CD8-positive, alpha-beta T cell (primary cell): ENCODE measurements at regions of chr19 and their contacts with region 1.

Region 1: DNA sequence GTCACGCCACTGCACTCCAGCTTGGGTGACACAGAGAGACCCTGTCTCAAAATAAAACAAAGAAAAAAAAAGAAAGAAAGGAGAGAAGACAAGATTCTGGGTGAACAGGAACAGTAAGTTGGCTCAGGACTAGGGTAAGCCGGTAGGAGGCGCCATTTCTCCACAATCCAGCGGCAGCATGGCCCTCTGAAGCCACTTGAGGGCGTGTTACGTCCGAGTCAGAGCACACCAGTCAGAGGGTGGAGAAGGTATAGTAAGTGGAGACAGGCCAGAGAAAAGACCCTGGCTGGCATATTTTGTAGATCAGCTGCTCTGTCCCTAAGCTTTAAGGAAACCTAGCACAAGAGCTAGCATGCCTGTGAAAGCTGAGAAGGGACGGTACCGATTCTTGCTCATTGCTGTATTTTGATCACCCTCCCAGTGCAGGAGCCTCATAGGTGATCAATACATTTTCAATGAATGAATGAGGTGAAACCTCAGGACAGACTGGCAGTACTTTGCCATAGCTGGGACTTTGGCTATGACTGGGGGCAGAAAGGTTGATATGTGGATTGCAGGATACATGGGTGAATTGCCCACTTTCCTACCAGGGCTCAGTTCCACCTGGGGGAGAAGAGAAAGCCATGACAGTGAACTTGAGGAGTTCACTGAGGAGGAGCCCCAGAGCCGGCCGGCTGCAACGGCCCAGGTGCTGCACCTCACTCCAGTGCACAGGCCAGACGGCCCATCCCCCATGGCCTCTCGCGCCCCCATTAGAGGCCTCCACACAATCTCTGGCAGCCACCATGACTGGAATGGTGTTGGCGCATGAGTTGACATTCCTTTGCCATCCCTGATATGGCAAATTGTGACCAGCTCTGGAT is 23.5 kb downstream of the POU2F2 start:
- DNase-seq: peak; percentile 83 to 94 (median 91)
- ATAC-seq: peak; percentile 99
- H3K4me3 ChIP-seq: no peak overlapping the region
- H3K4me3 Mint-ChIP-seq: no peak overlapping the region
- H3K27ac ChIP-seq: no peak overlapping the region
- H3K27ac Mint-ChIP-seq: peak overlapping the region; percentile 20
- H3K4me1 ChIP-seq: peaks cover 4% of the 10 kb centered on the region
- H3K4me1 Mint-ChIP-seq: peaks cover 8% of the 10 kb centered on the region
- H3K27me3 ChIP-seq: no peaks in the 10 kb centered on the region
- H3K27me3 Mint-ChIP-seq: no peaks in the 10 kb centered on the region
- CTCF ChIP-seq: peak; percentile 100

Region 2: DNA sequence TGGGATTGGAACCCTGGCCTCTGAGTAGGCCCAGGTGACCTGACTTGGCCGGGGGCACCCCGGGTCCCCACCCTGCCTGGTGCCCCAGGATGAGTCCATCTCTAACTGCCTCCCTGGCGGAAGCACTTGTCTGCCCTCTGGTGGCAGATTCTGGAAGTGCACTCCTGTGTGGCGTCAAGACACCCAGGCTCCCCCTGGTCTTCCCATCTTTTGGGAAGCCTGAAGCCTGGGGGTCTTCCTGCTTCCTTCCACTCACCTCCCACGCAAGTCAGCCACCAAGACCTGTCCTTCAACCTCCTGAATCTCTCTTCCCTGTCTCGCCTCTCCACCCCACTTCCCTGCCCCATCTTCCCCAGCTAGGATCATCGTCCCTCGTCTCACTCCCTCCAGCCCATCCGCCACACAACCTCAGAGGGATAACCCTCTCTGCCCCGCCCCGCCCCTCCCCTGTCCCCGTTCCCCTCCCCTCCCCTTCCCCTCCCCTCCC is 157.0 kb before region 1 on chr19:
- CTCF ChIA-PET with region 1: no interaction called
- POLR2A ChIA-PET with region 1: no interaction called
- intact Hi-C with region 1: no loop called
- DNase-seq: peak; percentile 73 to 97 (median 89)
- ATAC-seq: peak; percentile 88
- H3K4me3 ChIP-seq: no peak overlapping the region
- H3K4me3 Mint-ChIP-seq: no peak overlapping the region
- H3K27ac ChIP-seq: no peak overlapping the region
- H3K27ac Mint-ChIP-seq: peak overlapping the region; percentile 85
- H3K4me1 ChIP-seq: peaks cover 15% of the 10 kb centered on the region
- H3K4me1 Mint-ChIP-seq: peaks cover 31% of the 10 kb centered on the region
- H3K27me3 ChIP-seq: no peaks in the 10 kb centered on the region
- H3K27me3 Mint-ChIP-seq: no peaks in the 10 kb centered on the region
- CTCF ChIP-seq: peak; percentile 96

Region 3: DNA sequence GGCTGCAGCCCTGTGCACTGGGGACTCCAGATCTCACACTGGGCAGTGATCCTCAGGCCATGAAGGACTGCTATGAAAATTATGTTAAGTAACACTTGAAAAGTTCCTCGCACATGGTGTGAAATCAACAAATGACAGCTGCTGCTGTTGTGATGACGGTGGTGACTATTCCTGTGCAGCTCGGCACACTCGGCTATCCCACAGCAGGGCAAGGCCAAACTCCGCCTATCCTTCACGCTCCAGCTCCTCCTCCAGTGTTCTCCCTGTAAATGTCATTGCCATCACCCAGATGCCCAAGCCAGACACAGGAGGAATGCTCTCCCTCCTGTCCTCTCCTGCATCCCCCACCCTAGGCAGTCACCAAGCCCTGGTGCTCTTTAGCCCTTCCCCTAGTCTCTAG is 70.1 kb before region 1 on chr19:
- CTCF ChIA-PET with region 1: no interaction called
- POLR2A ChIA-PET with region 1: no interaction called
- intact Hi-C with region 1: no loop called
- DNase-seq: no peak
- ATAC-seq: no peak
- H3K4me3 ChIP-seq: no peak overlapping the region
- H3K4me3 Mint-ChIP-seq: no peak overlapping the region
- H3K27ac ChIP-seq: no peak overlapping the region
- H3K27ac Mint-ChIP-seq: no peak overlapping the region
- H3K4me1 ChIP-seq: no peaks in the 10 kb centered on the region
- H3K4me1 Mint-ChIP-seq: peaks cover 5% of the 10 kb centered on the region
- H3K27me3 ChIP-seq: no peaks in the 10 kb centered on the region
- H3K27me3 Mint-ChIP-seq: no peaks in the 10 kb centered on the region
- CTCF ChIP-seq: no peak

Region 4: DNA sequence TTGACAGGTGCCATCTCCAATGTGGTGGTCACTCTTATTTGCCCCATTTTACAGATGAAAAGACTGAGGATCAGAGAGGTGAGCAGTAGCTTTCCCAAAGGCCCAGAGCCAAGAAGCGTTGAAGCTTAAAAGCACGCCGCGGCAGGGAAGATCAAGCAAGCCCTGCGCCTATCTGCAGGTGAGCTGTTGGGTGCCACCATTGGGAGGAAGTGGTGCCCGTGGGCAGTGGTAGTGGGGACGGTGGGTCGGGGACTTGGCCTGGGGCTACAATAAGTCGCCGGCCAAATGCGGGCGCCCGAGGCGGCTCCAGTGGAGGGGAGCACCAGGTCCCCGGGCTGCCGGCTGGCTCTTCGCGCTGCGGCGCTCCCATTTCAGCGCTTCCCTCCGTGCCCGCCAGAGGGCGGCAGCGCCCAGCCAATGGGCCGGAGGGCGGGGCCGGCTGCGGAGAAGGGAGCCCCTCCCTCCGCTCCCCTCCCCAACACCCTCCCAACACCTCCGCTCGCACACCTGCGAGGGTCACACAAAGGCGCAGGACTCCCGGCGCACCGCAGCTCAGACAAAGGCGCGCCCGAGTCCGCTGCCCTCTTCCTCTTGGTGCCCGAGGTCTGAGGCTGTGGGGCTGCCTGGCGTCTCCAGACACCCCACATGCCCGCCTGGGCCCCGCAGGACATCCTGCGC is 24.2 kb after region 1 on chr19:
- CTCF ChIA-PET with region 1: interaction called, 38 read pairs
- POLR2A ChIA-PET with region 1: no interaction called
- intact Hi-C with region 1: loop called (anchors 1 kb)
- DNase-seq: peak; percentile 69 to 95 (median 83)
- ATAC-seq: peak; percentile 69
- H3K4me3 ChIP-seq: peak overlapping the region; percentile 64 to 96
- H3K4me3 Mint-ChIP-seq: peak overlapping the region; percentile 83
- H3K27ac ChIP-seq: peak overlapping the region; percentile 54 to 68
- H3K27ac Mint-ChIP-seq: peak overlapping the region; percentile 86
- H3K4me1 ChIP-seq: peaks cover 66% of the 10 kb centered on the region
- H3K4me1 Mint-ChIP-seq: peaks cover 63% of the 10 kb centered on the region
- H3K27me3 ChIP-seq: no peaks in the 10 kb centered on the region
- H3K27me3 Mint-ChIP-seq: no peaks in the 10 kb centered on the region
- CTCF ChIP-seq: peak; percentile 93

Region 5: GRCh38 chr19:42176990-42177685 is 68.4 kb after region 1 on chr19:
- CTCF ChIA-PET with region 1: interaction called, 79 read pairs
- POLR2A ChIA-PET with region 1: interaction called, 3 read pairs
- intact Hi-C with region 1: loop called (anchors 2 kb)
- DNase-seq: peak; percentile 52 to 90 (median 74)
- ATAC-seq: peak; percentile 95
- H3K4me3 ChIP-seq: peak overlapping the region; percentile 49 to 50
- H3K4me3 Mint-ChIP-seq: no peak overlapping the region
- H3K27ac ChIP-seq: no peak overlapping the region
- H3K27ac Mint-ChIP-seq: no peak overlapping the region
- H3K4me1 ChIP-seq: peaks cover 17% of the 10 kb centered on the region
- H3K4me1 Mint-ChIP-seq: peaks cover 12% of the 10 kb centered on the region
- H3K27me3 ChIP-seq: peaks cover 0 to 22% of the 10 kb centered on the region in 2 experiments
- H3K27me3 Mint-ChIP-seq: peaks cover 27% of the 10 kb centered on the region
- CTCF ChIP-seq: peak; percentile 43

Region 6: DNA sequence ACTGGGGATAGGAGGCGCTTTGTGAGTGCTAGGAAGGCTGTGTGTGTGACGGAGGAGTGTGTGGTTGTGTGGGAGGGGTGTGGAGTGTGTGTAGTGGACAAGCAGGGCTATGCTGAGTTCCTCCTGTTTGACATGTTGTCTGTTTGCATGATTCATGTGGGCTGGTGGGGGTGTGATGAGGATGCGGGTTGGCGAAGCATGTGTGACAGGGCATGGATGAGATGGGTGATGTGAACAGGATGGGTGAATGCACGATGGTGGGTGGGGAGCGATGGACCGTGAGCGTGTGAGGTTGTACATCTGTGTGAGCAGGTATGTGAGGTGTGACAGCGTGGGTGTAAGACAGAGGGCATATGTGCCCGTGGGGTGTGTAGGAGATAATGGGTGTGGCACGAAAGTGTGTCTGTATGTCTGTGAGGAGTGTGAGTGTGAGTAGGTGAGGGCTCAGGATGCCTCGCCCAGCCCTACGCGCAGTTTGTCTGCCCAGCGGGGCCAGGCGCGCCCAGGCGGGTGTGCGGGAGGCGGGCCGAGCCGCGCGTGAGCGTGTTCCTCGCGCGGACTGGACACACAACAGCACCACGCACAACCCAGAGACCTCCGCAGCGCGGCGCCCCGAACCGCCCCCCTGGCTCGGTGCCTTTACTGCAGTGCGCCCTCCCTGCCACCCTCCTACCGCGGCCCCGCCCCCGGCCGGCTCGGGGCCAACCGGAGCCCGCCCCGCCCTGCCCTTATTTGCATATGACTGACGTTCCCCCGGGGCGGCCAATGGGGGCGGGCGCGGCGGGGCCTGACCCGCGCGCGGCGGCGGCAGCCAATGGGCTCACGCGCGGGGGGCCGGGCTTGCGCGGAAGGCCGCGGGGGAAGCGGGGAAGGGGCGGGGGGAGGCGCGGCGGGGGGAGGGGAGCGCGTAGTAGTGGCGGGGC is 174.6 kb after region 1 on chr19:
- CTCF ChIA-PET with region 1: interaction called, 11 read pairs
- POLR2A ChIA-PET with region 1: no interaction called
- intact Hi-C with region 1: no loop called
- DNase-seq: peak; percentile 90 to 98 (median 97)
- ATAC-seq: peak; percentile 69
- H3K4me3 ChIP-seq: peak overlapping the region; percentile 40 to 59
- H3K4me3 Mint-ChIP-seq: no peak overlapping the region
- H3K27ac ChIP-seq: peak overlapping the region; percentile 85 to 94
- H3K27ac Mint-ChIP-seq: no peak overlapping the region
- H3K4me1 ChIP-seq: peaks cover 47% of the 10 kb centered on the region
- H3K4me1 Mint-ChIP-seq: peaks cover 48% of the 10 kb centered on the region
- H3K27me3 ChIP-seq: no peaks in the 10 kb centered on the region
- H3K27me3 Mint-ChIP-seq: no peaks in the 10 kb centered on the region
- CTCF ChIP-seq: no peak

Region 7: GRCh38 chr19:42401365-42402303 is 292.9 kb after region 1 on chr19:
- CTCF ChIA-PET with region 1: interaction called, 8 read pairs
- POLR2A ChIA-PET with region 1: no interaction called
- intact Hi-C with region 1: loop called (anchors 1 kb)
- DNase-seq: peak; percentile 56 to 86 (median 77)
- ATAC-seq: peak; percentile 71
- H3K4me3 ChIP-seq: peak overlapping the region; percentile 47 to 61
- H3K4me3 Mint-ChIP-seq: peak overlapping the region; percentile 85
- H3K27ac ChIP-seq: peak overlapping the region; percentile 25 to 46
- H3K27ac Mint-ChIP-seq: peak overlapping the region; percentile 88
- H3K4me1 ChIP-seq: peaks cover 18% of the 10 kb centered on the region
- H3K4me1 Mint-ChIP-seq: peaks cover 41% of the 10 kb centered on the region
- H3K27me3 ChIP-seq: no peaks in the 10 kb centered on the region
- H3K27me3 Mint-ChIP-seq: no peaks in the 10 kb centered on the region
- CTCF ChIP-seq: peak; percentile 79

Region 8: GRCh38 chr19:42529248-42529764 is 420.5 kb after region 1 on chr19:
- CTCF ChIA-PET with region 1: no interaction called
- POLR2A ChIA-PET with region 1: no interaction called
- intact Hi-C with region 1: loop called in 1 of 2 experiments (anchors 2 kb)
- DNase-seq: peak; percentile 43 to 80 (median 67)
- ATAC-seq: peak; percentile 87
- H3K4me3 ChIP-seq: peak overlapping the region in 1 of 2 experiments; percentile 45
- H3K4me3 Mint-ChIP-seq: peak overlapping the region; percentile 72
- H3K27ac ChIP-seq: no peak overlapping the region
- H3K27ac Mint-ChIP-seq: peak overlapping the region; percentile 55
- H3K4me1 ChIP-seq: peaks cover 17% of the 10 kb centered on the region
- H3K4me1 Mint-ChIP-seq: peaks cover 32% of the 10 kb centered on the region
- H3K27me3 ChIP-seq: no peaks in the 10 kb centered on the region
- H3K27me3 Mint-ChIP-seq: no peaks in the 10 kb centered on the region
- CTCF ChIP-seq: peak; percentile 94